ENCODE measurements at regions of chr14 and their contacts with region 1.

Region 1: DNA sequence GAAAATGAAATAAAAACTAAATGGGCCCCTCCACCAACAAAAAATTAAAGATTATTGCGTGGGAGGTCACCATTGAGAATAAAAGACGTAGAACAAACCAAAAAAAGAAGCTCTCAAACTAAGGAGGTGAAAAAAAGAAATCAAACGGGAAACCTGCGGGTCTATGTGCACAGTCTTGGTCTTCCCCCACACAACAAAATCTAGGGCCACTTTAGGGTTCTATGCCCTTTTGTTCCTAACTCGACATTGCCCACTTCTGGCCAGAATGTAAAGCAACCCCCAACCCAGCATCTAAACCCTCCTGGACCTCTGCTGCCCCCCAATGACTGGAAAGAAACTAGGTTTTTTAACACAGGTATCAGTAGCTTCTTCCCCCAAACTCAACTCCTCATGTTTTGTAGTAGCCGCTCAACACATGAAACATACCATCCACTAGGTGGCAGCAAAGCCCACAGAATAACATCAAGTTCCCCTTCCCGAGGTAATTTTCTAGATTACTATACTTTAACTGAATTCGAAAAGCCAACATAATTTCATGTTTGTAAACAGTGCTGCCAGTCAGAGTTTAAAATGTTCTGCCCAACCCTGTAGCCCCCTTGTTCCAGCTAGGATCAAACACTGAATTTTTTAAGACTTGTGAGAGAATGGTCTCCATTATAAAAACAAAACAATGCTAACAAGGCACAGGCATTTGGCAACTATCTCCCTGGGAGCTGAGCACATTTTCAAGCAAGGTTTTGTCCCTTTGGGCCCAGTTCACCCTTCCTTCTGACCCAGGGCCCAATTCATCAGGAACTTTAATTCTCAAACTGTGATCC is 18.7 kb downstream of the DAD1 start:
- DNase-seq: no peak
- H3K4me3 ChIP-seq: no peak overlapping the region
- H3K27ac ChIP-seq: no peak overlapping the region
- H3K27me3 ChIP-seq: no peaks in the 10 kb centered on the region
- CTCF ChIP-seq: peak; percentile 68

Region 2: DNA sequence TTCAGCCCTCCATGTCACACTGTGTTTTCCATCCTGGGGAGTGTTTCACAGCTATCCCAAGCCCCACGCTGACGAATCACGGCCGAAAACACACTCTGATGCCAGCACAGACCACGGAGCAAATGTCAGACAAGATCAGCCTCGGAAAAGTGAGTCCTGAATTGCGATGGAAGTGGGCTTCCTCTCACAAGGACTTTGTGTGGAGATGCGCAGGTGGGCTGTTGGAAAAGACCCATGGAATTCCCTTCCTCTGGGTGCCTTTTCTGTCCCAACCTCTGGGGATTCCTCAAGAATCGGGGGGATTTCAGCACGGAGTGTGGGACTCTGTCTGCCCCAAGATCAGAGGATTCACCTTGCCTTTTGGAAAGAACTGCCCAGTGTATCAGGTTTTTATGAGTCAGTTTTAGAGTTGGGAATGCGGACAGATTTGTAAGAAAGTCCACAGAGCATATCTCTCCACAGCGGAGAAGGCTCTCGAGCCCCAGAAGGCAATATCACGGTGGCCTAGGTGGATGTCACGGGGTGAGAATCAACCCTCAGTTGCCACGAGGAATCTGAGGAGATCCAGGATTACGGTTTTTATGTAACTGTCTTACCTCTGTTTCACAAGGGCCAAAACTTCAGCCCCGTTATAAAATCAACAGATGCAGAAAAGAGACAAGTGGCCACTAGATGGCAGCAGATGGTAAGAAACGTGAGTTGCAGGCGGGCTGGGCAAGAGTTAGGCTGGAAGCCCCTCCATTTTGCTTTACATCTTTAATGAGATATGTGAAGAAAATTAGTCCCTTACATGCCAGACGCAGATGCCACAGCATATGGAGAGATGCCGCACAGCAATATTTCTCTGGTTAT is 183.2 kb before region 1 on chr14:
- CTCF ChIA-PET with region 1: interaction called, 14 read pairs
- POLR2A ChIA-PET with region 1: no interaction called
- DNase-seq: peak; percentile 47
- H3K4me3 ChIP-seq: no peak overlapping the region
- H3K27ac ChIP-seq: no peak overlapping the region
- H3K27me3 ChIP-seq: peaks cover 5% of the 10 kb centered on the region
- CTCF ChIP-seq: peak; percentile 74

Region 3: GRCh38 chr14:22589096-22589839 is 18.9 kb after region 1 on chr14 and contains the start of gene DAD1:
- CTCF ChIA-PET with region 1: interaction called, 55 read pairs
- POLR2A ChIA-PET with region 1: interaction called, 3 read pairs
- DNase-seq: peak; percentile 99
- H3K4me3 ChIP-seq: peak within 1 kb of the TSS; percentile 98
- H3K27ac ChIP-seq: peak within 1 kb of the TSS; percentile 97
- H3K27me3 ChIP-seq: no peaks in the 10 kb centered on the region
- CTCF ChIP-seq: no peak
- polyA plus RNA-seq, gene DAD1: 420 and 467 TPM in 2 replicates

Region 4: DNA sequence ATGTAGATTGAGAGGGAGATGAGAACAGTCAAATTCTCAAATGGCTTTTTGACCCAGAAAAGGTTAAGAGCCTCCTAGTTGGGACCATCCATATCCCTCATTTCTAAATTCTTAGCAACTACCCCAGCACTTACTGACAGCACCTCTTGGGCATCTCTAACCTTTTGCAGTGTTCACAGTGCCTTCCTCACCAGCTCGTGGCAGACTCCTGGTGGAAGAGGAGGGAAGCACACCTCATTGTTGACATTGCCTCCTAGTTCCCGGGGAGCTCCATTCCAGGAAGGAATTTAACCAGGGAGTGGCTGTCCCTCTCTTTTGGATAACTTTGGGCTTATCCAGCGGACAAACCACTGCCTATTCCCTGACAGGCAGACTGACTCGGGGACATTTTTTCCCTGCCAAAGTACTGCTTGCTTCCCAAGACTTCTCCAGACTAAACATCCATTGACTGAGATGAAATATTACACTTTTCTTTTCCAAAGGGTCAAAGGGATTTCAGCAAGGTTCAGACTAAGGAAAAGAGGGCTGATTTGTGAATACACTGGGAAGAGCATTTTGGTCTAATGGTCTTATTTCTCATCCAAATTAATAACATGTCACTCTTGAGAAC is 82.8 kb after region 1 on chr14:
- CTCF ChIA-PET with region 1: interaction called, 113 read pairs
- POLR2A ChIA-PET with region 1: no interaction called
- DNase-seq: peak; percentile 57
- H3K4me3 ChIP-seq: no peak overlapping the region
- H3K27ac ChIP-seq: no peak overlapping the region
- H3K27me3 ChIP-seq: peaks cover 2% of the 10 kb centered on the region
- CTCF ChIP-seq: peak; percentile 98

Region 5: GRCh38 chr14:22781586-22781991 is 211.2 kb after region 1 on chr14:
- CTCF ChIA-PET with region 1: interaction called, 13 read pairs
- POLR2A ChIA-PET with region 1: no interaction called
- DNase-seq: no peak
- H3K4me3 ChIP-seq: no peak overlapping the region
- H3K27ac ChIP-seq: no peak overlapping the region
- H3K27me3 ChIP-seq: no peaks in the 10 kb centered on the region
- CTCF ChIP-seq: no peak

Region 6: DNA sequence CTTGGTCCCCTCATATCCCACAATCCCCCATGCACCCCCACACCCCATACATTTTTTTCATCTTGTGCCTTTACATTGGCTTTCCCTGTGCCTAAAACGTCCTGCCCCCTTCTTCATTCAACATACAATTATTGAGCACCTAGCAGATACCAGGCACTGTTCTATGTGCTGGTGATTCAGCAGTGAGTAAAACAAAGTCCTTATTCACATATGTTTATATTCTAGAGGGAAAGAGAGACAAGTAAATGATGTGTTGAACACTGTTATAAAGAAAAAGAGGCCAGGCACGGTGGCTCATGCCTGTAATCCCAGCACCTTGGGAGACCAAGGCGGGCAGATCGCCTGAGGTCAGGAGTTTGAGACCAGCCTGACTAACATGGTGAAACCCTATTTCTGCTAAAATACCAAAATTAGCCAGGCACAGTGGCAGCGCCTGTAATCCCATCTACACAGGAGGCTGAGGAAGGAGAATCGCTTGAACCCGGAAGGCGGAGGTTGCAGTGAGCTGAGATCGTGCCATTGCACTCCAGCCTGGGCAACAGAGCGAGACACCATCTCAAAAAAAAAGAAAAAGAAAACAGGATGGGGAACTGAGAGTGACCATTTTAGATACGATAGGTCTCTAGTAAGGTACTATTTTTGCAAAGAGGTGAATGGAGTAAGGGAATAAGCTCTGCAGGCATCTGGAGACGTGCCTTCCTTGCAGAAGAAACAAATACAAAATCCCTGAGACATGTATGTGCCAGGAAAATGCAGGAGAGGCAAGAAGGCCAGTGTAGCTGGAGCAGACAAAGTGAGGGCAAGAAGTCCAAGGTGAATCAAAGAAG is 232.7 kb after region 1 on chr14:
- CTCF ChIA-PET with region 1: no interaction called
- POLR2A ChIA-PET with region 1: no interaction called
- DNase-seq: no peak
- H3K4me3 ChIP-seq: no peak overlapping the region
- H3K27ac ChIP-seq: no peak overlapping the region
- H3K27me3 ChIP-seq: no peaks in the 10 kb centered on the region
- CTCF ChIP-seq: no peak

Region 7: GRCh38 chr14:22836301-22837113 is 266.2 kb after region 1 on chr14 and contains the start of gene MMP14:
- CTCF ChIA-PET with region 1: interaction called, 12 read pairs
- POLR2A ChIA-PET with region 1: no interaction called
- DNase-seq: no peak
- H3K4me3 ChIP-seq: peak within 1 kb of the TSS; percentile 89
- H3K27ac ChIP-seq: peak within 1 kb of the TSS; percentile 94
- H3K27me3 ChIP-seq: no peaks in the 10 kb centered on the region
- CTCF ChIP-seq: peak; percentile 65
- polyA plus RNA-seq, gene MMP14: 365 and 448 TPM in 2 replicates

Region 8: DNA sequence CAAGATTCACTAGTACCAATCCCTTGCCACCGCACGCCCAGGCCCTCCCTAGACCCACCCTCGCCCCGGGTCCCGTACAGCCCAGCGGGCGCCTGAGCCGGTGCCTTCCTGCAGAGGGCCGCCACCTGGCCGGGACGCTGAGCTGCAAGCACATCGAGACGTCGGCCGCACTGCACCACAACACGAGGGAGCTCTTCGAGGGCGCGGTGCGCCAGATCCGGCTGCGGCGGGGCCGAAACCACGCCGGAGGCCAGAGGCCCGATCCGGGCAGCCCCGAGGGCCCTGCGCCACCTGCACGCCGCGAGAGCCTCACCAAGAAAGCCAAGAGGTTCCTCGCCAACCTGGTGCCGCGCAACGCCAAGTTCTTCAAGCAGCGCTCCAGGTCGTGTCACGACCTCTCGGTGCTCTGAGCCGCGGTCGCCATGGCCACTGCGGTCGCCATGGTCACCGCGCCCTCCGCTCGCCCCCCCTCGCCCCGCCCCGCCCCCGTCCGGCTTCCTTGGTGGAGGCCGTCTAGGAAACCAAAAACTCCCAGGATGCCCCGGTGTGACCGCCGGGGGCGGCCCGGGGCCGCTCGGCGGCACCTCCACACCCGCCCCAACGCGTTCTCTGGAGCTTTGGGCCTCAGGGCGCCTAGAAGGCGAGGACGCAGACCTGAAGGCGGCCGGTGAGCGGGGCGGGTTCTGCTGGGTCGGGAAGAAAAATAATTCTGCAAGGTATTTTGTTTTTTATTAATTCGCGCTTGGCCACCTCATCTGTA is 316.3 kb after region 1 on chr14:
- CTCF ChIA-PET with region 1: interaction called, 6 read pairs
- POLR2A ChIA-PET with region 1: interaction called, 10 read pairs
- DNase-seq: no peak
- H3K4me3 ChIP-seq: peak overlapping the region; percentile 63
- H3K27ac ChIP-seq: peak overlapping the region; percentile 65
- H3K27me3 ChIP-seq: no peaks in the 10 kb centered on the region
- CTCF ChIP-seq: no peak